Vagina (tissue), 2 donors: ENCODE measurements at regions of chr1 and their contacts with region 1.

Region 1: GRCh38 chr1:28886731-28887418 is 27.5 kb upstream of the EPB41 start:
- DNase-seq: no peak
- H3K4me3 ChIP-seq: peak overlapping the region; percentile 60 to 96
- H3K27ac ChIP-seq: peak overlapping the region; percentile 79
- H3K4me1 ChIP-seq: peaks cover 49% of the 10 kb centered on the region
- H3K27me3 ChIP-seq: no peaks in the 10 kb centered on the region
- CTCF ChIP-seq: peak in 1 of 3 experiments; percentile 9
- POLR2A ChIP-seq: peak in 1 of 2 donors; percentile 23

Region 2: GRCh38 chr1:29033829-29034466 is 147.1 kb after region 1 on chr1:
- intact Hi-C with region 1: loop called (anchors 1 kb)
- DNase-seq: no peak
- H3K4me3 ChIP-seq: no peak overlapping the region
- H3K27ac ChIP-seq: no peak overlapping the region
- H3K4me1 ChIP-seq: no peaks in the 10 kb centered on the region
- H3K27me3 ChIP-seq: no peaks in the 10 kb centered on the region
- CTCF ChIP-seq: peak; percentile 54 to 76 (median 57)
- POLR2A ChIP-seq: no peak

Region 3: GRCh38 chr1:29113413-29114117 is 226.7 kb after region 1 on chr1:
- intact Hi-C with region 1: no loop called
- DNase-seq: no peak
- H3K4me3 ChIP-seq: no peak overlapping the region
- H3K27ac ChIP-seq: no peak overlapping the region
- H3K4me1 ChIP-seq: peaks cover 6% of the 10 kb centered on the region
- H3K27me3 ChIP-seq: no peaks in the 10 kb centered on the region
- CTCF ChIP-seq: no peak
- POLR2A ChIP-seq: no peak

Region 4: DNA sequence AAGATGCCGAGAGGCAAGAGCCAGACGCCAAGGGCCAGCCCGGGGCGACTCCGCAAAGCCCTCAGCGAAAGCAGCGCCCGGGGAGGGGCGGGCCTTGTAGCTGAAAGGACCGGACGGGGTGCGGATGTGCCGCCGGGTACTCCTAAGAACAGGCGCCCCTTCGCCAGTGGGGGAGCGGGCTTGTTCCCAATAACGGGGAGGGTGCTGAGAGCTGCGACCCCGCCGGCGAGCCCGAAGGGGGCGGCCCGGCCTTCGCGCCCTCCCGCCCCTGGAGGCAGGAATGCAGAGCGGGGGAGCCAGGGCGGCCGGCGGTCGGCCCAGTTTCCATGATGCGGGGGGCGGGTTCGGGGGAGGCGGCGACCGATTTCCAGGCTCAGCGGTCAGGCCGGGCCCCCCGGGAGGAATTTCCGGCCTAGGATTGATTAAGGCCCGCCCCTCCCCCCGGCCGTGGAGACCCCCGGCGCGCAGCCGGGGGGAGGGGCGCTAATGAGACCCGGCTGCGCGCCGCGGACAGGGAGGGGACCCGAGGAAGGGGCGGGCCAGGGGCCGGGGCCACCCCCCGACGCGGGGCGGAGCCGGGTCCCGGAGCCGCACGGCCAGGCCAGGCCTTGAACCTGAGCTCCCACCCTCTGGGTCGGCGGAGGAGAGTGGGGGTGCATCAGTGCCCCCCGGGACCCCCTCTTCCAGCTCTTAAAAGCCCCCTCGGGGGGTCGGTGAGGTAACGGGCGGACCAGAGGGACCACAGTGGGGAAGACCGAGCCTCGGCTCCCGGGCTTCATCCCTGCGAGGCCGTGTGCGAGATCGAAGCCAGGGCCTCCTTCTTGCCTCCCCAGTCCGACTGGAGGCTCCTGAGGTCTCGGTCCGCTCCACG is 237.7 kb after region 1 on chr1:
- intact Hi-C with region 1: loop called (anchors 10 kb)
- DNase-seq: peak in 1 of 2 donors; percentile 93
- H3K4me3 ChIP-seq: peak overlapping the region; percentile 67 to 75
- H3K27ac ChIP-seq: peak overlapping the region; percentile 94
- H3K4me1 ChIP-seq: peaks cover 56% of the 10 kb centered on the region
- H3K27me3 ChIP-seq: no peaks in the 10 kb centered on the region
- CTCF ChIP-seq: peak; percentile 43 to 99 (median 59)
- POLR2A ChIP-seq: peak; percentile 72 to 83

Region 5: DNA sequence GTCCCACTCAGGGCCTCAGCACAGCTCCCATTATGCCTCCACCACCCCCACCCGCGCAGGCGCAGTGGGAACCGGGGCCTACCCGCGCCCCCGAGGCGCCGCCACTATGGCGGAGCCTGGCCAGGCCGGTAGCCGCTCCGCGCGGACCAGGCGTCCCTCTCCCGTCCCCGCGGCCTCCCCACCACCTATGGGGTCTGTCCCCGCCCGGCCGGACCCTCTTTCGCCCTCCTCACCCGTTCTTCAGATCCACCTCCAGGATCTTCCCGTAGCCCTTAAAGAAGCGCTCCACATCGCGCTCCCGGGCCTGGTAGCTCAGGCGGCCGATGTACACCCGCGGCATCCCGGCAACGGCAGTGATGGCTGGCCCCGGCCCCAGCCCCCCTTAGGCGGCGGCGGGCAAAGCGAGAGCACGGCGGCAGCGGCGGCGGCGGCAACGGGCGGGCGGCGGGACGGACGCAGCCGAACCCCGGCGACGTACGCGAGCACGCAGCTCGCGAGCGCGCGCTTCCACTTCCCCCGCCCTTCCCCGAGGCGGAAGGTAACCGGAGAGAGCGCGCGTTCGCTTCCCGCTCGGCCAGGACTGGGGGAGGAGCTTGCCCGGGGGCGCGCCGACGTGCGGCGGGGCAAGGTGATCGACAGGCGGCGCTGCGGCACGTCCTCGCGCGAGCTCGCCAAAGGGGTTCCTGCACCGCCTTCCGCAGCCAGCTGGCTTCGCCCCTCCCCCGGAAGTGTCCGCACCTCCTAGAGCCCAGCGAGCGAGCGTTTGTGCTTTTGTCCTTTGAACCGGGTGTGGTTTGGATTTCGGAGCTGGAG is 294.7 kb after region 1 on chr1 and contains the start of gene SRSF4:
- intact Hi-C with region 1: loop called (anchors 5 kb)
- DNase-seq: peak; percentile 98
- H3K4me3 ChIP-seq: peak within 1 kb of the TSS; percentile 80 to 99
- H3K27ac ChIP-seq: peak within 1 kb of the TSS; percentile 99
- H3K4me1 ChIP-seq: peaks cover 51% of the 10 kb centered on the region
- H3K27me3 ChIP-seq: no peaks in the 10 kb centered on the region
- CTCF ChIP-seq: peak; percentile 45 to 54 (median 52)
- POLR2A ChIP-seq: peak in 1 of 2 donors; percentile 94
- total RNA-seq, gene SRSF4: 67.8 TPM

Region 6: GRCh38 chr1:29202584-29203340 is 315.9 kb after region 1 on chr1:
- intact Hi-C with region 1: loop called (anchors 5 kb)
- DNase-seq: peak in 1 of 2 donors; percentile 95
- H3K4me3 ChIP-seq: no peak overlapping the region
- H3K27ac ChIP-seq: peak overlapping the region; percentile 77
- H3K4me1 ChIP-seq: peaks cover 12% of the 10 kb centered on the region
- H3K27me3 ChIP-seq: no peaks in the 10 kb centered on the region
- CTCF ChIP-seq: peak; percentile 96 to 99 (median 99)
- POLR2A ChIP-seq: no peak